ENCODE measurements at regions of chr1 and their contacts with region 1.

Region 1: DNA sequence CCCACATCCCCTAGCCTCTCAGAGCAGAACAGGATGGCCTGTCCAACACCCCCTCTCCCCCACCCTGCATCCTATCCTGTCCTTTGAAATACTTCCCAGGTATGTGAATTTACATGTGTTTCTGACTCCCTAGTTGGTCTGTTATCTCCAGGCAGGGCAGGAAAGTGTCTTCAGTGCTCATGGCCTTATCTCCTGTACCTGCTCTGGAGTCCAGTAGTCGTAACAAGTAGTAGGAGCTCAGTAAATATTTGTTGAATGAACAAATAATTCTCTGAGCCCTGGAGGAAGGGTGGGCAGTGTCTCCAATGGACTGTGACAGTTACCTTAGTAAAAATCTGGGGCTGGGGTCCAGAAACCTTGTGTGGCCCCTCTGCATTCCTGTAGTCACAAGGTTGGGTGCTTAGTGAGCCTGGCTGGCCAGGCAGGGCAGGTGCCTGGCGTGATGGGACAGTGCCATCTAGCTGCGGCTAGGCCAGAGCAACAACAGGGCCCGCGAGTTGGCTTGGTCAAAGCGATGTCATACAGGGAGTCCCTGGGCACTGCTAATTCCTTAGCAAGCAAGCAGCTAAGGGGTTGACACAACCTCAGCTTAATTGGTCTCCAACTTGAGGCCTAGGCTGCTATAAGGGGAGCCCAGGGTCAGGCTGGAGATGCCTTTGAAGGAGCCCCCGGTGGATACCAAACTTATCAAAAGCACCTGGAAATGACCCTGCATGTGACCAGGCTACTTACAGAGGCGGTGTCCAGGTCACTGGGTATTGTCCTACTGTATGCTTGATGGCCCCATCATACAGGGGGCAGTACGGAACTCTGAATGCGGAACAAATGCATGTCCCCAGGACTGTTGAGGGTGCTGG is 89.0 kb upstream of the PPM1J start:
- DNase-seq: peak; percentile 58 to 85 (median 81)
- ATAC-seq: peak; percentile 96
- H3K4me3 ChIP-seq: no peak overlapping the region
- H3K4me1 ChIP-seq: peaks cover 1% of the 10 kb centered on the region
- CTCF ChIP-seq: peak; percentile 64

Region 2: DNA sequence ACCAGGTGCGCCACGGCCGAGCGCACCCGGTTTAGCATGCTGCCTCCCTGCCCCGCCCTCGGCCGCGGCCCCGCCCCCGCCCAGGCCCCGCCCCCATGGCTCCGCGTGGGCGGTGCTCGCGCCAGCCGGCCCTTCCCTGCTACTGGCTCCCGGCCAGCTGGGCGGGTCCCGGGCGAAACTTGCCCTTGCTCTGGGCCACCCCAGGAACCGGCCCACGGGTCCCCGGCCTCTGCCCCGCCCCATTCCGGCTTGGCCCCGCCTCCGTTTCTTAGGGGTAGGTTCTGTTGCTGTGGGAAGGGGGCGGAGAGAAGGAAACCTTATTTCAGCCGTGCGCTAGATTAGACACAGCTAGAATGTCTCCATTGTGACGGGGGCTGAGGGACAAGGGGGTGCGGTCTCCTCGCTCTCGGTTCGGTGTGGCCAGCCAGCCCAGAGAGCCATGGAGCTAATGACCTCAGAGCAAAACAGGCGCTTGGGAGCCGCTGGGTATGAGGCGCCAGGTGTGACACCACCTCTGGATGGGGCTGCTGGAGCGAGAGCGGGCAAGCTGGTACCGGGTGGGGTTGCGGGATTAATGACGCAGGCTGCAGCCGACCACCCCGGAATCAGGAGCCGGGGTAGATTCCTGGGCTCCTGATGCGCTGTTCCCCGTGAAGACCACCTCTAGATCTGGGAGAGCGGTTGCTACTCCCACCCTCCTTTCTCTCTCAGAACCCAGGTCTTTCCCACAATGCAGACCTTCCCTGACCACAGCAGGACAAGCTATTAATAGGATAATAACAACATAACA is 88.7 kb before region 1 on chr1 and contains the start of gene PPM1J:
- intact Hi-C with region 1: loop called (anchors 5 kb)
- DNase-seq: peak; percentile 99 to 100 (median 100)
- ATAC-seq: peak; percentile 89
- H3K4me3 ChIP-seq: no peak within 1 kb of the TSS
- H3K4me1 ChIP-seq: peaks cover 12% of the 10 kb centered on the region
- CTCF ChIP-seq: no peak
- total RNA-seq, gene PPM1J: 0.92 to 1.7 (median 1.1) TPM

Region 3: GRCh38 chr1:112722601-112723510 is 81.3 kb before region 1 on chr1:
- intact Hi-C with region 1: loop called (anchors 5 kb)
- DNase-seq: no peak
- ATAC-seq: peak; percentile 52
- H3K4me3 ChIP-seq: no peak overlapping the region
- H3K4me1 ChIP-seq: no peaks in the 10 kb centered on the region
- CTCF ChIP-seq: no peak

Region 4: DNA sequence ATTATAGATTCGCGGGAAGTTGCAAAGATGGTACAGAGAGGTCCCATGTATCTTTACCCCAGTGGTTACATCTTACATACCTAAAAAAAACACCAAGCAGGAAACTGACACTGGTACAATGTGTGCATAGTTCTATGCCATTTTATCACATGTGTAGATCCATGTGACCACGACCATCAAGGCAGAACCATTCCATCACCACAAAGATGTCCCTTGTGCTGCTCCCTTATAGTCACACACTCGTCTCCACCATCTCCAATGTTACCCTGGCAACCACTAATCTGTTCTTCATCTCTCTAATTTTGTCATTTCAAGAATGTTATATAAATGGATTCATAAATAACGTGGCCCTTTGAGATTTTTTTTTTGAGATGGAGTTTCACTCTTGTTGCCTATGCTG is 429.3 kb after region 1 on chr1:
- intact Hi-C with region 1: no loop called
- DNase-seq: no peak
- ATAC-seq: no peak
- H3K4me3 ChIP-seq: no peak overlapping the region
- H3K4me1 ChIP-seq: no peaks in the 10 kb centered on the region
- CTCF ChIP-seq: no peak